AG04450 (cell line): ENCODE measurements at regions of chr1 and their contacts with region 1.

Region 1: GRCh38 chr1:9629445-9630201 is 21.9 kb upstream of the PIK3CD start:
- DNase-seq: no peak
- H3K4me3 ChIP-seq: no peak overlapping the region
- H3K27ac ChIP-seq: no peak overlapping the region
- H3K27me3 ChIP-seq: peaks cover 7% of the 10 kb centered on the region
- CTCF ChIP-seq: no peak

Region 2: GRCh38 chr1:9201401-9202239 is 428.0 kb before region 1 on chr1:
- CTCF ChIA-PET with region 1: interaction called, 10 read pairs
- POLR2A ChIA-PET with region 1: no interaction called
- DNase-seq: no peak
- H3K4me3 ChIP-seq: peak overlapping the region; percentile 81
- H3K27ac ChIP-seq: peak overlapping the region; percentile 80
- H3K27me3 ChIP-seq: no peaks in the 10 kb centered on the region
- CTCF ChIP-seq: no peak

Region 3: DNA sequence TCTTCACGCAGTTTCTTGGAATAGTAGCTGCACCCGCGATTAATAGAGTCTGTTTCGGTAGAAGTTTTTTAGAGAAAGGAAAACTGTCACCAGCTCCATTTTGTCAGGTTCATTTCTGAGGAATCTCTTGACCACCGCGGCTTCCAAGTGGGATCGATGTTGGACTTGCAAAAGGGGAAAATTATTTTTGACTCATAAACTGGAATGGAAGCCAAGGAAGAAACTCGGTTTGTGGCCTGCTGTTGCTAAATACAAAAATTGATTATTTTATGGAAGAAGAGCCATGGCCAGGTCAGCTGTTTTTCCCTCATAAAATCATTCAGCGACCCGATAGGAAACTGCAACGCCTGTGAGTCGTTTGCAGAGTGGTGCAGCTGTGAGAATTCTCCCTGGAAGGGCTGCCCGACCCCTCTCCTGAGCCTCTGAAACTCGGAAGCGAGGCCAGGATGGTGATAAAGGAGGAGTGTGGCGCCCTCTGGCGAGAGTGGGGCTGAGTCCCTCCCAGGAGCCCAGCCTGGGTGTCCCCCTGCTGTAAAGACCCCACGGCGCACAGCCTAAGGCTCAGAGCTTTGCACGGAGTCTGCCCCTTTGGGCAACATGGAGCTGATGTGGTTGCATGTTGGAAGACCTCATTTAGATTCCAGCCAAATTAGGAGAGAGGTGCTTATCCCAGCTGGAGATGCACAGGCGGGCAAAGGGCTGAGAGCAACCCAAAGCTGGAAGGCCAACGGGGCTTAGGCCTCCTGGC is 174.0 kb before region 1 on chr1:
- CTCF ChIA-PET with region 1: no interaction called
- POLR2A ChIA-PET with region 1: no interaction called
- DNase-seq: no peak
- H3K4me3 ChIP-seq: no peak overlapping the region
- H3K27ac ChIP-seq: no peak overlapping the region
- H3K27me3 ChIP-seq: peaks cover 8% of the 10 kb centered on the region
- CTCF ChIP-seq: peak; percentile 87

Region 4: GRCh38 chr1:9615316-9616063 is 14.1 kb before region 1 on chr1:
- CTCF ChIA-PET with region 1: interaction called, 12 read pairs
- POLR2A ChIA-PET with region 1: no interaction called
- DNase-seq: peak; percentile 13
- H3K4me3 ChIP-seq: no peak overlapping the region
- H3K27ac ChIP-seq: no peak overlapping the region
- H3K27me3 ChIP-seq: no peaks in the 10 kb centered on the region
- CTCF ChIP-seq: peak; percentile 84

Region 5: DNA sequence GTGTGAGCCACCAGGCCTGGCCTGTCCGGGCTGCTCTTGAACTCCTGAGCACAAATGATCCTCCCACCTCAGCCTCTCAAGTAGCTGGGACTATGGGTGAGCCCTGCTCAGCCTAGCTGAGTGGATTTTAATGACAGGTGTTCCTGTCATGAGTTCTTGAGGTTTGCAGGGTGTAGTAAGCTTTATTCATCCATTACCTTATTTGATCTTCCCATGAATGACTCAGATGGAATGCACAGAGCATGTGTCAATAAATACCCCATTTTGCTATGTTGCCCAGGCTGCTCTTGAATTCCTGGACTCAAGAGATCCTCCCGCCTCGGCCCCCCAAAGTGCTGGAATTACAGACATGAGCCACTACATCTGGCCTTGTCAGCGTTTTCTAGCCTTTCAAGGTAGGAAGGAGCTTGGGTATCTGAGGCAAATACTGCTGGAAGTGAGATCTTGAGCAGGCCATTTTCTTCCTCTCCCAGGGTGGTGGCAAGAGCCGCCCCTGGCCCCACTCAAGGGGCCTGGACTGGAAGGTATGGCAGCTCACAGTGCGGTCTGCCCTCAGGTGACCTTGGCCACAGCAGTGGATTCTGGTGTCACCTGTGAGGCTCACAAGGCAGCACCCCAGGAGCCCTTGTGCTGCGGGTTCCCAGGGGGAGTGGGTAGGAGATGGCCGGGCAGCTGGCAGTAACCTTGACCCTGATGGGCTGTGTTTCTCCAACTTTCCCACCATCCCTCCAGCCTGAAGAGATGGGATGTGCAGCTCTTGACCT is 41.9 kb after region 1 on chr1:
- CTCF ChIA-PET with region 1: interaction called, 10 read pairs
- POLR2A ChIA-PET with region 1: no interaction called
- DNase-seq: peak; percentile 68
- H3K4me3 ChIP-seq: no peak overlapping the region
- H3K27ac ChIP-seq: peak overlapping the region; percentile 80
- H3K27me3 ChIP-seq: no peaks in the 10 kb centered on the region
- CTCF ChIP-seq: no peak

Region 6: GRCh38 chr1:9701661-9702060 is 72.0 kb after region 1 on chr1:
- CTCF ChIA-PET with region 1: interaction called, 12 read pairs
- POLR2A ChIA-PET with region 1: no interaction called
- DNase-seq: no peak
- H3K4me3 ChIP-seq: no peak overlapping the region
- H3K27ac ChIP-seq: no peak overlapping the region
- H3K27me3 ChIP-seq: no peaks in the 10 kb centered on the region
- CTCF ChIP-seq: no peak

Region 7: DNA sequence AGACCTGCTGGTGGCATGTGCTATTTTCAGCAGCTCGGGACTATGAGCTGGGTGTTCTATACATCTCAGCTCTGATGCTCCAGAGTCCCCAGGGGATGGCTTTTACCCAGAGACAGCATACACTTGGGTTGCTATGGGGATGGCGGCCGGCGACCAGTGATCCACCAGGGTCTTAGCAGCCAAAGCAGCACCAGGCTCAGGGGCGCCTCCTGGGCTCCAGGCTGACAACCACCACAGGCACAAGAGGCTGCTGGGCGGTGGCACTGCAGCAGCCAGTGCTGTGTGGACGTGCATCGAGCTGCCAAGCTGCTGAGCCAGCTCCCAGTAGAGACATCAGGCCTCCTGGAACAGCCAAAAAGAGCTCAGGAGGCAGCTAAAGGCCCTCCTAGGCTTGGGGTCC is 231.7 kb after region 1 on chr1:
- CTCF ChIA-PET with region 1: interaction called, 13 read pairs
- POLR2A ChIA-PET with region 1: no interaction called
- DNase-seq: no peak
- H3K4me3 ChIP-seq: no peak overlapping the region
- H3K27ac ChIP-seq: no peak overlapping the region
- H3K27me3 ChIP-seq: no peaks in the 10 kb centered on the region
- CTCF ChIP-seq: no peak

Region 8: GRCh38 chr1:9867408-9868243 is 238.0 kb after region 1 on chr1:
- CTCF ChIA-PET with region 1: interaction called, 24 read pairs
- POLR2A ChIA-PET with region 1: no interaction called
- DNase-seq: peak; percentile 21
- H3K4me3 ChIP-seq: no peak overlapping the region
- H3K27ac ChIP-seq: no peak overlapping the region
- H3K27me3 ChIP-seq: no peaks in the 10 kb centered on the region
- CTCF ChIP-seq: peak; percentile 95